A549 (cell line): ENCODE measurements at regions of chr20 and their contacts with region 1.

Region 1: GRCh38 chr20:44180814-44181213 is 6.2 kb downstream of the JPH2 start:
- DNase-seq: no peak
- ATAC-seq: no peak
- H3K4me3 ChIP-seq: no peak overlapping the region
- H3K27ac ChIP-seq: no peak overlapping the region
- H3K4me1 ChIP-seq: no peaks in the 10 kb centered on the region
- CTCF ChIP-seq: no peak
- EP300 ChIP-seq: no peak
- POLR2A ChIP-seq: no peak
- RAD21 ChIP-seq: no peak

Region 2: GRCh38 chr20:44196271-44196670 is 15.5 kb after region 1 on chr20:
- CTCF ChIA-PET with region 1: interaction called, 68 read pairs
- POLR2A ChIA-PET with region 1: no interaction called
- DNase-seq: peak in 1 of 2 experiments; percentile 32
- ATAC-seq: peak; percentile 74 to 80
- H3K4me3 ChIP-seq: no peak overlapping the region
- H3K27ac ChIP-seq: no peak overlapping the region
- H3K4me1 ChIP-seq: peaks cover 6% of the 10 kb centered on the region
- CTCF ChIP-seq: peak; percentile 23; the same call in 1 of the 3 replicates
- EP300 ChIP-seq: no peak
- POLR2A ChIP-seq: no peak
- RAD21 ChIP-seq: no peak